Ascending aorta (tissue), 2 donors: ENCODE measurements at regions of chr12 and their contacts with region 1.

Region 1: DNA sequence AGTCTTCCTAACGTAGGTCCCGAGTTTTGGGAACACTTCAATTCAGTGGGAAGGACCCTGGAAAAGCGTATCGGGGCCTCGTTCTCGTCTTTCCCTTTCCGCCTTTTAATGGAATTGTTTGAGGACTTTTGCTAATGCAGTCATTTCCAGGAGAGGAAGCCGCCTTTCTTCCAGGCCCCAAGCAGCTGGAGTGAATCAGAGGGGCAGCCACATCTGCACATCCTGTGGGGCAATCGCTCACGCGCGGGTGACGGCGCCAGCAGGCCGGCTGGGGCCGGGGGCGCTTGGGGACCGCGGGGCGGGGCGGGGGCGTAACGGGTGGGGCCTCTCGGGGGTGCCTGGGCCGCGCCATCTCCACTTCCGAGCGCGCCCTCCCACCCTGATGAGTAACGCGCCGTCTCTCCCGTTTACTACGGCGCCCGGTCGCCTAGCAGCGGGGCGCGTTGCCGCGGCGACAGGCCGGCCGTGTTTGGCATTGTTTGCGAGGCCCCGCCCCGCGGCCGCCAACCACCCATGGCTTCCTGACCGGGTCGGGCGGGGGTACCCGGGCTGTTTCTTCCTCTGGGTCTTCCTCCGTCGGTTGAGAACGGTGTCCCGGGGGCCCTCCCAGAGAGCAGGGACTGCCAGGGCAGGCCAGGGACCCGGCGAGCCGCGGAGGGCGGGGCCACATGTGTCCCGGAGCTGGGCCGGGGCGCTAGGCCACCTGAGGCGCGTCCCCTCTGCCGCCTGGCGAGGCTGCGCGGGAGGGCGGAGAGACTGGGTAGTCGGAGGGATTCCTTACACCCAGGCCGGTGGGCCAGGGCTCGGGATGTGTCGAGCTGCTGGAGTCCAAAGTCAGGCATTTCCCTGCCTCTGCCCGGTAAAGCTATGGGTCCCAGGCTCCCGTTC is 2.3 kb downstream of the GSG1 start:
- DNase-seq: peak; percentile 90 to 98
- H3K4me3 ChIP-seq: peak overlapping the region; percentile 53 to 63
- H3K27ac ChIP-seq: peak overlapping the region; percentile 92 to 94
- H3K4me1 ChIP-seq: peaks cover 10 to 42% of the 10 kb centered on the region in 2 donors
- H3K27me3 ChIP-seq: no peaks in the 10 kb centered on the region
- CTCF ChIP-seq: no peak

Region 2: GRCh38 chr12:12786716-12787601 is 314.2 kb before region 1 on chr12:
- intact Hi-C with region 1: loop called (anchors 5 kb)
- DNase-seq: peak; percentile 15 to 91
- H3K4me3 ChIP-seq: peak overlapping the region; percentile 55 to 74
- H3K27ac ChIP-seq: peak overlapping the region; percentile 84 to 90
- H3K4me1 ChIP-seq: peaks cover 3 to 14% of the 10 kb centered on the region in 2 donors
- H3K27me3 ChIP-seq: no peaks in the 10 kb centered on the region
- CTCF ChIP-seq: peak in 1 of 3 experiments; percentile 42

Region 3: DNA sequence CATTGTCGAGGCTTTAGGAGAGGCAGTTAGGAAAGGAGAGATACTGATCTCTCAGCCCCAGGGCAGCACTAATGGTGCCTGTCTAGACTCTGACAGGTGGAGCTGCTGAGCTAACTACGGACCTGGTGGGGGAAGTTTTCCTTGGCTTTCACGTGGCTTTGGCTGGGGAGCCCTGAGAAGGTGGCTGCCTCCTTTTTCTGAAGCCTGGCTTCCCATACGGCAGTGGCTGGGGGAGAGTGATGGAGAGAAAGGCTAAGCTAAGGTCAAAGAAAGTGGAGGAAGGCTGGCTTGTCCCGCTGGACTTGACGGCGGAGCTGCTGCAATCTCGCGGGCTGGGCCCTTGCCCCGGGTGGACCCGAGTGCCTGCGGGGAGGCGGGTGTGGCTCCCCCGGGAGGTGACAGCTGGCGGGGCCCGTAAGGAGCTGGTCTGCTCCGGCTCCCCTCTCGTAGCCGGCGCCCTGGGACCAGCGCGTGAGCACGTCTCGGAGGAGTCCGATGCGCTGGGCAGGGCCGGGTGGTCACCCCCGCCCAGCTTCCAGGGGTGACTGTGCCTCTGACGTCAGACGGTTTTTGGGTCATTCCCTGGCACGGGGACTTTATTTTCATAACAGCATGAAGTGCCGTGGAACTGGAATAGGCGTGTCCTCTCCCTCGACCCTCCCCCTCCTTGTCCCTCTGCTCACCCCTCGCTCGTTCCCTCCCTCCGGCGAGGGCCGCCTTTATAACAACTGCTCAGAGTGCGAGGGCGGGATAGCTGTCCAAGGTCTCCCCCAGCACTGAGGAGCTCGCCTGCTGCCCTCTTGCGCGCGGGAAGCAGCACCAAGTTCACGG is 210.1 kb before region 1 on chr12 and contains the start of gene GPRC5A:
- intact Hi-C with region 1: loop called (anchors 5 kb)
- DNase-seq: peak; percentile 93 to 99
- H3K4me3 ChIP-seq: peak within 1 kb of the TSS; percentile 65 to 70
- H3K27ac ChIP-seq: peak within 1 kb of the TSS; percentile 93 to 94
- H3K4me1 ChIP-seq: peaks cover 0 to 4% of the 10 kb centered on the region in 2 donors
- H3K27me3 ChIP-seq: no peaks in the 10 kb centered on the region
- CTCF ChIP-seq: peak in 2 of 3 experiments; percentile 19 to 35
- total RNA-seq, gene GPRC5A: 23.8 TPM

Region 4: GRCh38 chr12:12975322-12976077 is 125.6 kb before region 1 on chr12:
- intact Hi-C with region 1: loop called (anchors 5 kb)
- DNase-seq: peak in 1 of 2 donors; percentile 76
- H3K4me3 ChIP-seq: peak overlapping the region in 1 of 2 donors; percentile 35
- H3K27ac ChIP-seq: peak overlapping the region; percentile 87 to 91
- H3K4me1 ChIP-seq: peaks cover 5 to 34% of the 10 kb centered on the region in 2 donors
- H3K27me3 ChIP-seq: no peaks in the 10 kb centered on the region
- CTCF ChIP-seq: peak; percentile 16 to 66 (median 46)

Region 5: DNA sequence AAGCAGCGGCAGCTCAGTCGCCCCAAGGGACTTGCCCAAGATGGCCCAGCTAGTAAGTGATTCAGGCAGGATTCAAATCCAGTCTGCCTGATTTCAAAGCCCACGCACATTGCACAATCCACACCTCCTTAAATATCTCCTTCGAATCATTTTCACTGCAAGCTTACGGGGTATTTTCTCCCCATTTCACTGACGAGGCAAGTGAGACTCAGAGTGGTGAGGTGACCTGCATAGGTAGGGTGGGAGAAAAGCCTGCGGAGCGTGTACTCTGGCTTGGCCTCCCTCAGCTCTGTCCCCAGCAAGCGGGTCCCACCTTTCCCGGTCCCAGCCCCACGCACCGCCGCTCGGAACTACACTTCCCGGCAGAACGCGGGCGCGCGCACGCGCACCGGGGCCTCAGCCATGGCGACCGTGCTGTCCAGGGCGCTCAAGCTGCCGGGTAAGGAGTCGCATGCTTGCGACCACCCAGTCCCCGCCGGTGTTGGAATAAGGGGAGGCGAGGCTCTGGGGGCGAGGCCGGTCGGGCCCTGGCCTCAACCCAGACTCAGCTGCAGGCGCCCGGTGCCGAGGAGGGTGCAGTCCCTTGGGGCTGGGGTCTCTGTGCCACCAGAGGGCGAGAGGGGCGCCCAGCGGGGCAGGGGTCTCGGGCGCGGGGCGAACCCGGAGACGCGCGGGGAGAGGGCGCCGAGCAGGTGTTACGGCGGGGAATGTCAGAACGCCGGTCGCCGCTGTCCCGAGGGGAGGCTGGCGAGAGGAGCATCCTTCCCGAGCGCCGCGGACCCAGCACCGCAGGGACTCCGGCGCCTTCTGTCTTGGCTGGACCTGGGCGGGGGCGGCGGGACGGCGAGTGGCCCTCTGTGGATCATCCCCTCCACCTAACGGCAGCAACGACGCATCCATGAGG is 56.9 kb before region 1 on chr12 and contains the start of gene FAM234B:
- intact Hi-C with region 1: loop called (anchors 2 kb)
- DNase-seq: peak; percentile 14 to 91
- H3K4me3 ChIP-seq: peak within 1 kb of the TSS; percentile 90 to 97
- H3K27ac ChIP-seq: peak within 1 kb of the TSS; percentile 61 to 63
- H3K4me1 ChIP-seq: peaks cover 0 to 6% of the 10 kb centered on the region in 2 donors
- H3K27me3 ChIP-seq: no peaks in the 10 kb centered on the region
- CTCF ChIP-seq: peak in 2 of 3 experiments; percentile 10 to 35
- total RNA-seq, gene FAM234B: 6.7 TPM

Region 6: DNA sequence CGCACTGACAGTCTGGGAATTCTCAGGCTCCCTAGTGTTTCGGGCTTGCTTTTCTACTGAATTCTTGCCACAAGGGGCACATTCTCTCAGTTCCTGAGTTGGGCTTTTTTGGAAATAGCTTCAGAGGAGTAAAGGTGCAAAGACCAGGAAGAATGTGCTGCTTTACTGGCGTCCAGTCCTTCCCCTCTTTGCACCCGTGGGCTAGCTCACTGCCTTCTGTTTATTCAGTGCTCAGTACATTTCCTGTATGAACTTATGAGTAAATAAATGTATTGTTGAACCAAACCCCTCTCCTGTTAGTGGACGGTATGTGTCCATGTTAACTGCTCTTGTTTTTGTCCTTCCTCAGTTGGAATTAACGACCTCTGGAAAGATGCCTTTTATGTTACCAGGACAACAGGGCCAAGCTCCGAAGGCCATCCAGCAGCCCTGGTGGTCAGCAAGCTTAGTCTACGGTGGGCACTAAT is 21.7 kb before region 1 on chr12:
- intact Hi-C with region 1: no loop called
- DNase-seq: no peak
- H3K4me3 ChIP-seq: no peak overlapping the region
- H3K27ac ChIP-seq: no peak overlapping the region
- H3K4me1 ChIP-seq: no peaks in the 10 kb centered on the region
- H3K27me3 ChIP-seq: no peaks in the 10 kb centered on the region
- CTCF ChIP-seq: no peak

Region 7: DNA sequence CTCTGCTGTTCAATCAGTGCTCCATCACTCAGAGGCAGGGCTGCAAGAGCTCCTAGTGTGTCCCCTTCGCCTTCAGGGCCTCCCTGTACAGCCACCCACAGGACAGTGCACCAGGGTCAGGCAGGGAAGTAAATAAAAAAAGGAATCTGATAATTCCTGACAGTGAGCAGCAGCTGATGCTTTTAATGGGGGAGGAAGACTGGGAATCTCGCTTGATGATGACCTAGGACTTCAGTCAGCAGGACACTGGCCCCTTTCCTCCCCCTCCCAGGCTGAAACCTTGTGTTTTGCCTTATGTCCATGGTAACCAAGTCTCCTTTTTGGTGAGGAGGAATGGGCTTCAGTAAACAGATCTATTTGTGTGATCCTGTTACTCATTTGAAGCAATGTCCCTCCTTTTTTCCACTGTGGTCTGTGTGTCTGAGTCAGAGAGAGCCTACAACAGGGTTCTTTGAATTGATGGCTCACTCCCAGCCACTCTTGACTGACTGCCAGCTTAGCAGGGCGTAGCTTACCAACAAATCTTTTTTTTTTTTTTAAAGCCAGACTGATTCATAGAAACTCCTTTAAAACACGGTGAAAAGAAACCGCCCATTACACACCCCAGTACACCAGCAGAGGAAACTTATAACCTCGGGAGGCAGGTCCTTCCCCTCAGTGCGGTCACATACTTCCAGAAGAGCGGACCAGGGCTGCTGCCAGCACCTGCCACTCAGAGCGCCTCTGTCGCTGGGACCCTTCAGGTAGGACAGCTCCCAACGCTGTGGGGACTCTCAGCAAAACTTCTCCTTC is 95.2 kb after region 1 on chr12 and contains the start of gene EMP1:
- intact Hi-C with region 1: loop called (anchors 1 kb)
- DNase-seq: peak; percentile 89 to 98
- H3K4me3 ChIP-seq: peak within 1 kb of the TSS; percentile 52 to 71
- H3K27ac ChIP-seq: peak within 1 kb of the TSS; percentile 82 to 85
- H3K4me1 ChIP-seq: peaks cover 3 to 7% of the 10 kb centered on the region in 2 donors
- H3K27me3 ChIP-seq: no peaks in the 10 kb centered on the region
- CTCF ChIP-seq: no peak
- total RNA-seq, gene EMP1: 588 TPM

Region 8: GRCh38 chr12:14769969-14770495 is 1668.9 kb after region 1 on chr12:
- intact Hi-C with region 1: loop called (anchors 5 kb)
- DNase-seq: peak; percentile 41 to 90
- H3K4me3 ChIP-seq: peak overlapping the region; percentile 75 to 81
- H3K27ac ChIP-seq: peak overlapping the region; percentile 88 to 98
- H3K4me1 ChIP-seq: peaks cover 0 to 7% of the 10 kb centered on the region in 2 donors
- H3K27me3 ChIP-seq: no peaks in the 10 kb centered on the region
- CTCF ChIP-seq: peak; percentile 78 to 93 (median 78)